H1 (cell line): ENCODE measurements at regions of chr4 and their contacts with region 1.

Region 1: DNA sequence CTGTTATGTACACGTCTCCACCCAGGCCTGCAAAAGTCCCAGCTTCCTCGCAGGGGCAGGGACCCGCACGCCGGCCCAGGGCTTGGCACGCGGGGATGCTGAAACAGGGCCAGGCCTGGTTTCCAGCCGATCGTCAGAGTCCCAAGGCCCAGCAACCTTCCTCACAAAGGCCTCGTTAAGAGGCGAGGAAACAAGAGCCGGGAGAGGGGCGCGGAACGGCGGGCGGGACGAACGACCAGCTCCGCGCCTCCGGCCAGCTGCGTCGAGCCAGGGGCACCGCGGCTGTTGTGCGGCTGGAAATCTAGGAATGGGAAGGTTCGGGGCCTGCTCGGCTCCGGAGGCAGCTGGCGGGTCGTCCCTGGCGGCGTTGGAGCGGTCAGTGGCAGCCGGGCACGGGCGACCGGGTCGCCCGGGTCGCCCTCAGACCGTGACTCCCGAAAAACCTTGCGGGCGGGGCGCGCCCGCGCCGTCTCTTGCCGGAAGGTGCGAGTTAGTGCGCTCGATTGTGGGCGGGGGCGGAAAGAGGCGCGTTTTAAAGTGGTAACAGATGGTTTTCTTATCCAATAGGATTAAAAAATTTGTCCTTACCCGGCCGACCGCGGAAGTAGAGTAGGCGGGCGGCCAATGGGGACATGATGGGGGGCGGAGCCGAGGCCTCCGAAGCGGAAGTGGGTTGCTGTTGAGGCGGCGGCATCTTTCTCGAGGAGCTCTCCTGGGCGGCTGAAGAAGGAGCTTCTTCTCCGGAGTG is at the start of gene RNF4:
- DNase-seq: peak; percentile 77 to 89
- H3K4me3 ChIP-seq: peak within 1 kb of the TSS; percentile 88 to 96 (median 90)
- H3K27ac ChIP-seq: peak within 1 kb of the TSS; percentile 81
- H3K4me1 ChIP-seq: peaks cover 0 to 4% (median 0%) of the 10 kb centered on the region in 4 experiments; a peak in 3 of 7 replicates
- H3K27me3 ChIP-seq: peaks cover 0 to 3% (median 0%) of the 10 kb centered on the region in 4 experiments; a peak in 3 of 7 replicates
- CTCF ChIP-seq: no peak
- EP300 ChIP-seq: no peak
- POLR2A ChIP-seq: peak in 1 of 2 experiments; percentile 68; a peak in 1 of 3 replicates
- RAD21 ChIP-seq: no peak
- total RNA-seq, gene RNF4: 75.0 and 78.9 TPM in 2 replicates

Region 2: DNA sequence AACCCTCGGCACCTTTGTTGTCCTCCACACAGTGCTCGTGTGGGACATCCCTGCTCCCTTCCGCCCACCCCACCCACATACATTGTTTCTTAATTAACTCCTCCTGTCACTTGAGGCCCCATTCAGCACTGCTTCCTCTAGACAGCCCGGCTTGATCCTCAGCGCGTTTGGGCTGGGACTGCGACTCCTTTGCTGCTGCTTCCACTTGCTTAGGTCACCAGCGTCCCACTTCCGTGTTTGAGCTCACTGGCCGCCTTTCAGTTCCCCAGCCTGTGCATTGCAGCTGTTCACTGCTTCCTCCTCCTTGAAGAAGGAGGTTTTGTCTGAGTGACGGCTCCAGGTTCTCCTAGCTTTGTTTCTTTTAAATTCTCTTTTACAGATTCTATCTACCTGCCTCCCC is 16.4 kb after region 1 on chr4:
- CTCF ChIA-PET with region 1: interaction called, 3 read pairs
- POLR2A ChIA-PET with region 1: interaction called, 10 read pairs
- DNase-seq: no peak
- H3K4me3 ChIP-seq: no peak overlapping the region
- H3K27ac ChIP-seq: no peak overlapping the region
- H3K4me1 ChIP-seq: peaks cover 1 to 8% (median 3%) of the 10 kb centered on the region in 4 experiments; a peak in 5 of 7 replicates
- H3K27me3 ChIP-seq: no peaks in the 10 kb centered on the region
- CTCF ChIP-seq: no peak
- EP300 ChIP-seq: no peak
- POLR2A ChIP-seq: no peak
- RAD21 ChIP-seq: no peak

Region 3: GRCh38 chr4:2536193-2537010 is 67.8 kb after region 1 on chr4 and contains the start of gene FAM193A:
- CTCF ChIA-PET with region 1: interaction called, 3 read pairs
- POLR2A ChIA-PET with region 1: interaction called, 24 read pairs
- DNase-seq: peak; percentile 96 to 100
- H3K4me3 ChIP-seq: peak within 1 kb of the TSS; percentile 70 to 93 (median 91)
- H3K27ac ChIP-seq: peak within 1 kb of the TSS; percentile 84
- H3K4me1 ChIP-seq: peaks cover 0 to 5% (median 4%) of the 10 kb centered on the region in 4 experiments; a peak in 3 of 7 replicates
- H3K27me3 ChIP-seq: no peaks in the 10 kb centered on the region
- CTCF ChIP-seq: no peak
- EP300 ChIP-seq: no peak
- POLR2A ChIP-seq: peak; percentile 47 to 60
- RAD21 ChIP-seq: no peak
- total RNA-seq, gene FAM193A: 26.2 and 27.2 TPM in 2 replicates